ENCODE measurements at regions of chr14 and their contacts with region 1.

Region 1: DNA sequence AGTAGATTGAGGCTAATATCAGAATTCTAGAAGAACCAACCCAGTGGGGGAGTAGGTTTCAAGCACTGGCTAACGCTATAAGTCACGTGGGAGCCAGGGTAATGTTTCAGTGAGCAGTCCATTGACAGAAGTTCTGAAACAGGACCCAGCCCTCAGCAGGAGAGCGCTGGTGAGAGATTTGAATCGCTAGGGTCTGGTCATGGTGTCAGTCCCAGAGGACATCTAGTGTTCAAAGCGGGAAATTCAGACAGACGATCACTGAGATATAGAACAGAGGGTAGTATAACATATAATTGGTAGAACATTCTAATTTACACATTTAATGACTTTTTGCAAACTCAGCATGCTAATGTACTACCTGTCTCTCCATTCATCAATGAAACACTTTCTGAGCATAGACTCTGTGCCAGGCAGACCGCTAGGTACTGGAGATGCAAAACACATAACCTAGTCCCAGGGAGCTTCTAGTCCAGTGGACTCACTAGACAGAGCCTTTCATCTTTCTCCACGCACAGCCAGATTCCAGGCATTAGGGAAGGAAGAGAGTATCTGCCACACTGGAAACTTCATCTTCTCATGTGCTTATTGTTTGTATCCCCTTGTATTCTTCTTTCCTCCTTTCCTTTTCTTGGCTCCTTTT is 35.4 kb upstream of the RNASE3 start:
- DNase-seq: no peak

Region 2: DNA sequence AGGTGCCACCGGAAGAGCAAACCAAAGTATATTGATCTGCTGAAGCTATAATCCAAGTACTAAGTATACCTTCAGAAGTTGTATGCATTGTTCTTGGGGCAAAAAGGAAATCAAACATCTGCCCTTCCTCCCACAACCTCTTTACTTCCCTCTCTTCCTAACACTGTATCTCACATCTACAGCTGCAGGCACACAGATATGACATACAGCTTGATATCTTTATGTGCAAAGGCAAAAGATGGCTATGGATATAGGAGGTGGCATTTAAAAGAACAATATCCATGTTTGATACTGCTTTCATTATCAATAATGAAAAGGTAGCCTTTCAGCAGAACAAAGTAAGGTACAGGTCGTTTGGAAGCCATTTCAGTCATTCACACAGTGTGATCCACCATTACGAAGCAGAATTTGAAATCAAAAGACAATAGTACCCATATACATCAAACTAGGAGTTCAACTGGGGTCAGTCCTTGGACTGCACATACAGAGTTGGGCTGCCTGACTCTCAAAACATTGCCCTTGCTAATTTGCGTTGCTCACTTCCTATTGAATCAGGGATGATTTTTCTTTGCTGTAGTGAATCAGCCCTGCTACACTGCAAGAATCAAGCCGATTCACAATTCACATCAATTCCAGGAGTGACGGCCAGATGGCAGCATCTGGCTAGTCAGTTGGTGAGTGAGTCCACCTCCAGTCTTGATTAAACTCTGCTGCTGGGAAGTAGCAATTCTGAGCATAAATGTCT is 158.3 kb before region 1 on chr14:
- intact Hi-C with region 1: loop called (anchors 2 kb)
- DNase-seq: no peak

Region 3: DNA sequence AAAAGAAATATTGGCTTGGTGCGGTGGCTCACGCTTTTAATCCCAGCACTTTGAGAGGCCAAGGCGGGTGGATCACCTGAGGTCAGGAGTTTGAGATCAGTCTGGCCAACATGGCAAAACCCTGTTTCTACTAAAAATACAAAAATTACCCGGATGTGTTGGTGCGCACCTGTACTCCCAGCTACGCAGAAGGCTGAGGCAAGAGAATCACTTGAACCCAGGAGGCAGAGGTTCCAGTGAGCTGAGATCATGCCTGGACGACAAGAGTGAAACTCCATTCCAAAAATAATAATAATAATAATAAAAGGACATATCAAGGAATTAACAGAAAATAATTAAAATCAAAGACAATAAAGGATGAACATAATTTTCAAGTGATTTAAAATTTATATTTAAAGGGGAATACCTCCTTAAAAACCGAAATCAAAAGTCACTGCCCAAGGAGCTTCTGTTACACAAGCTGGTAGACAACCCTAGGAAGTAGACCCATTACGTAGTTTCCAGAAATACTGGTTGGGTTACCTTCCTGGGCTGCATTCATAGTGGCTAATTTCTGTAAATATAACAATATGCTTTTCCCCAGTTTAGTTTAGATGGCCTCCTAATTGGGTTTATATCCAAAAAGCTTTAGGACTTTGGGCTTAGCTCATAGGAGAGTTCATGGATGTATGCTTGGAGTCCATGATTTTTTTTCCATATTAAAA is 112.4 kb before region 1 on chr14:
- intact Hi-C with region 1: no loop called
- DNase-seq: no peak

Region 4: GRCh38 chr14:20757965-20758364 is 97.8 kb before region 1 on chr14:
- intact Hi-C with region 1: loop called (anchors 5 kb)
- DNase-seq: no peak

Region 5: DNA sequence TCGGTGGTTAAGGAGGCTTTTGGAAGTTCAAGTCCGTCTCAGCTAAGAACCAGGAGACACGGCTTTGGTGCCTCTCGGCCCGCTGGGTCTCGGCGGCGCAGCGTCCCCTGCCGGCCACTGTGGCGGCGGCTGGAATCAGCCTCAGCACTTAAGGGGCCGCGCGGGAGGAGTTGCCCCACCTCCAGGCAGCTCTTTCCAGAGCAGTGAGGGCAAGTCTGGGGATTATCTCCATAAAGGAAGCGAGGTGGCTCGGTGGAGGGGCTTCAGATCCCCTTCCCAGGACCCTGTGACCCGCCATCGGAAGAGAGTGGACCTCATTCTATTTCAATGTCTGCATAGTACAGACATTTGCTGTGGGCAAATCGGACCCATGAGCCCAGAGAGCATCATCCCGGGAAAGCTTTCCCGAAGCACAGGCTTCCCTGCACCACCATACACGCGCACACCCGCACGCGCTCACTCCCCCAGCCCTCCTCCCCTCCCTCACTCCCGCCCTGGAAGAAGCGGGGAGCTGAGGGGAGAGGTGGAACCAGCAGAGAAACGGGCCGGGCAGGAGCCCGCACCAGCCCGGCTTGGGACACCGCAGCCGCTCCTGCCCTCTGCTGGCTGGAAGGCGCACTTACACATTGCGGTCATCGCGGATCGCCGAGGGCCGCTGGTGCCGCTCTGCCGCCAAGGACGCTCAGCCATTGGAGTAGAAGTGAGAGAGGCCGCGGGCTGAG is 115.4 kb after region 1 on chr14:
- intact Hi-C with region 1: loop called (anchors 5 kb)
- DNase-seq: peak; percentile 95

Region 6: DNA sequence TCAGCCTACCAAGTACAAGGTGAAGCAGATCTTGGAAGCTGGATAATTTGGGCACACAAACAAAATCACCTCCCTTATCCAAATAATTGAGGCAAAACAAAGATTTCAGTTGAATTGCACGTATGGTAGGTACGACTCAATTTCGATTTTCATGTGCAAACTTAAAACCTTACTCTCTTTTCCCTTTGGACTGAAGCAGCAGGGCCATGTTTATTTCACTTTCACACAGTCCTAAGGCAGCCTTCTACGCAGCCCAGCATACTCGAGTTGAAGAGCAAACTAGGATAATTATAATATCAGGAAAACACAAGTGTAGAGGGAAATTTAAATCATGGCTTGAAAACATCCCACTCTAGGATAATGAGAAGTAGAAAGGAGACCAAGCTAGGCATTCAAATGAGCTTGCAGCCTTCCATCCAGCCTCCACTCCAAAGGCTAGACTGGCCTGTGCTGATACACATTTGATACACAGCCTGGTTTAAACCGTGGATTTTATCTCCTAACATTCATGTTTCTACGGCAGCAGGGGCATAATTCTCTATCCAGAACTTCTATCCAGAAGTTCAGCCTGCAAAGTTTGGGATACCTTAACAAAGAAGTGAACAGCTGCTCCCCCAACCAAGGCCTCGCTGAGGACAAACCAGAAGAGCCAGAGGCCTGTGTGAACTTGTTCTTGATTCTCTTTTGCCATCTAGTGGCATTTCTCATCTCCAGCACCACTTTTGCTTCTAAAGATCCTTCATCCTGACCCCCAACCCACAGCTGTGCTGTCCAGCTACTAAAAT is 184.0 kb after region 1 on chr14:
- intact Hi-C with region 1: loop called (anchors 5 kb)
- DNase-seq: no peak

Region 7: GRCh38 chr14:21103710-21104447 is 248.1 kb after region 1 on chr14:
- intact Hi-C with region 1: loop called (anchors 5 kb)
- DNase-seq: peak; percentile 97

Measured in cardiac septum (tissue), 1 donor.